IMR-90 (cell line): ENCODE measurements at regions of chrX and their contacts with region 1.

Region 1: GRCh38 chrX:29890646-29891200 is 324.6 kb upstream of the MAGEB2 start:
- DNase-seq: peak; percentile 16
- ATAC-seq: no peak
- H3K4me3 ChIP-seq: no peak overlapping the region
- H3K27ac ChIP-seq: no peak overlapping the region
- H3K4me1 ChIP-seq: no peaks in the 10 kb centered on the region
- H3K27me3 ChIP-seq: no peaks in the 10 kb centered on the region; the same call in 1 of the 2 replicates
- CTCF ChIP-seq: no peak
- POLR2A ChIP-seq: no peak
- RAD21 ChIP-seq: no peak

Region 2: GRCh38 chrX:29687687-29688086 is 203.0 kb before region 1 on chrX:
- CTCF ChIA-PET with region 1: no interaction called
- POLR2A ChIA-PET with region 1: no interaction called
- dilution Hi-C with region 1: no loop called
- in situ Hi-C with region 1: loop called (anchors 10 kb)
- intact Hi-C with region 1: no loop called
- DNase-seq: peak; percentile 76
- ATAC-seq: peak; percentile 90
- H3K4me3 ChIP-seq: no peak overlapping the region
- H3K27ac ChIP-seq: no peak overlapping the region
- H3K4me1 ChIP-seq: no peaks in the 10 kb centered on the region
- H3K27me3 ChIP-seq: no peaks in the 10 kb centered on the region
- CTCF ChIP-seq: peak; percentile 42
- POLR2A ChIP-seq: no peak
- RAD21 ChIP-seq: peak; percentile 48

Region 3: DNA sequence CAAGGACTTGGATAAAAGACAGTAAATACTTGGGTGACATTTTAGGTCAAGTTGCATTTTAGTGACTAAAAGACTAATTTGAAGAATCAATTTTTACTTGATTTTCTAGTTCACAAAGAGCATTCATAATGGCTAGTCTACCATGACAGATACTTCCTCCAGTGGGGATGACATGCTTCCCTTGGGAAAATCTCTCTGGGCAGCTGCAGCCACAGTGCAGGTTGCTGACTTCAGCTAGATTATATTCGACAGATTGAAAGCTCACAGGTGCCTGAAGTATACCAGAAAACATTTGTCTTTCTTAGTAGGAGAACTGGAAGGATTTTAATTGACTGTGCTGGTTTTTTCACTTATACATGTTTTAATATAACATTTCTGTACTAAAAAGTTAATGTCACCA is 115.1 kb after region 1 on chrX:
- CTCF ChIA-PET with region 1: no interaction called
- POLR2A ChIA-PET with region 1: no interaction called
- dilution Hi-C with region 1: no loop called
- in situ Hi-C with region 1: no loop called
- intact Hi-C with region 1: no loop called
- DNase-seq: no peak
- ATAC-seq: no peak
- H3K4me3 ChIP-seq: no peak overlapping the region
- H3K27ac ChIP-seq: no peak overlapping the region
- H3K4me1 ChIP-seq: no peaks in the 10 kb centered on the region
- H3K27me3 ChIP-seq: no peaks in the 10 kb centered on the region; the same call in 1 of the 2 replicates
- CTCF ChIP-seq: no peak
- POLR2A ChIP-seq: no peak
- RAD21 ChIP-seq: no peak

Region 4: GRCh38 chrX:30652527-30653414 is 762.0 kb after region 1 on chrX:
- CTCF ChIA-PET with region 1: no interaction called
- POLR2A ChIA-PET with region 1: no interaction called
- dilution Hi-C with region 1: no loop called
- in situ Hi-C with region 1: no loop called
- intact Hi-C with region 1: no loop called
- DNase-seq: peak; percentile 88
- ATAC-seq: peak; percentile 95
- H3K4me3 ChIP-seq: peak overlapping the region; percentile 62
- H3K27ac ChIP-seq: peak overlapping the region; percentile 47
- H3K4me1 ChIP-seq: no peaks in the 10 kb centered on the region; the same call in 1 of the 2 replicates
- H3K27me3 ChIP-seq: no peaks in the 10 kb centered on the region
- CTCF ChIP-seq: no peak
- POLR2A ChIP-seq: no peak; the same call in 1 of the 2 replicates
- RAD21 ChIP-seq: no peak